Dorsolateral prefrontal cortex (tissue), 120 donors: ENCODE measurements at regions of chr7 and their contacts with region 1.

Region 1: GRCh38 chr7:96179837-96180236 is 142.1 kb downstream of the SLC25A13 start:
- DNase-seq: no peak
- H3K4me3 ChIP-seq: no peak overlapping the region
- H3K27ac ChIP-seq: peak overlapping the region in 2 of 59 donors; percentile 3 to 17
- H3K27me3 ChIP-seq: no peaks in the 10 kb centered on the region
- CTCF ChIP-seq: peak in 3 of 56 donors; percentile 13 to 20 (median 14)

Region 2: DNA sequence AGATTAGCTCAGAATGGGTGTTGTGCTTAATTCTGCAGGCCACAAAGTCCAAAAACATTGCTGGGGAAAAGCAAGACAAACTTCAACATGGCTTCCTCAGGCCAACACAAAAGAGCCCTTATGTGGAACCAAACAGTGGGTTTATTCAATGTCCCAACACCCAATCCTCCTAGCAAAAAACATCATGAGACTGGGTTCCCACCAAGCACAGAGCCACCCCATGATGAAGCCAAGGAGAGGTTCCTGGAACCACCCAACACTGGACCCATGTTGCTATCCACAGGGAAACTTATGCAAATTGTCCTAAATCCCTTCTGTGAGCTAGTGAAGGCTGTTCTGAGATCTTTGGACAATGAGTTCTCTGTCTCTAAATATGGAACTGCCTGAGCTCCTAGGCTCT is 118.0 kb after region 1 on chr7:
- intact Hi-C with region 1: loop called in 1 of 2 experiments (anchors 5 kb)
- DNase-seq: peak in 8 of 10 donors; percentile 56 to 81 (median 67)
- H3K4me3 ChIP-seq: peak overlapping the region in 2 of 59 donors; percentile 2 to 27
- H3K27ac ChIP-seq: peak overlapping the region; percentile 60 to 99 (median 94)
- H3K27me3 ChIP-seq: no peaks in the 10 kb centered on the region
- CTCF ChIP-seq: peak in 1 of 56 donors; percentile 10